H1 (cell line): ENCODE measurements at regions of chr3 and their contacts with region 1.

Region 1: DNA sequence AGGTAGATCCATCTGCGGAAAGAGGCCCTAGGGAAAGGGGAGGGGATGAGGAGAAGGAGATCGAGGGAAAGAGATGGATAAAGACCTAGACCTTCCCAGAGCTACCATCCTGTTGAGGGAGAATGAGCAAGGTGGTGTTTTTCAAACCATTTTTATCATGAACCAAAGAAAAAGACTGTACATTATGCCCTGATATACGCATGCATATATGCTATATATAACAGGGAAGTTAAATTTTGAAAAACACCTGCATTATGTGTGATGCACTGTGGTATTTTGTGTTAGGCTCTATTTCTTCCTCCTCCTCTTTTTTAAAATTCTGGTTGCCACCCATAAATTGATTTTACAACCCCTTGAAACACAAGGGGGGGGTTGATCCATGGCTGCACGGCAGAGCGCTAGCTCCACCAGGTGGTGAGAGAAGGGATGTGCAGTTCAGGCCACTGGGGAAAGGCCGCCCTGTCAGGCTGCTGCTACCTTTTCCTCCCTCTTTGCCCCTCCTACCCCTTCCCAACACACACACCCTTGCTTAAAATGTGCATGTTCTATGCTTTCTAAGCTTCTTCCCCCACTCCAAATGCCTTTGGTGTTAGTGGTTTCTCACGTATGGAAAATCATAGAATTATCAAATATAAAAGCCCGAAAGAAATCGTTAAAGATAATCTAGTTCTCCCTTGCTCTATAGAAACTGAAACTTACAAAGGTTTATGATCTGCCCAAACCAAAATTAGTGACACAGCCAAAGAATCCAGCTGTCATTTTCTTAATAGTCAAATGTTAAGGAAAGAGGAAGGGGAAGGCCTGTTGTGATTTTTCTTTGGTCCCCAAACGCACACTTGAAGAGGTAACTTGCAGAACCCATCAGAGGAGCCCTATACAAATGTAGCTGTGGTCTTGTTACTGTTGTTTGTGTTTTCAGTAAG is 262.0 kb upstream of the UMPS start:
- DNase-seq: peak; percentile 50 to 84
- H3K4me3 ChIP-seq: no peak overlapping the region
- H3K27ac ChIP-seq: no peak overlapping the region
- H3K4me1 ChIP-seq: no peaks in the 10 kb centered on the region; a peak in 1 of 7 replicates
- H3K27me3 ChIP-seq: no peaks in the 10 kb centered on the region
- CTCF ChIP-seq: peak; percentile 95 to 100 (median 98)
- EP300 ChIP-seq: no peak
- POLR2A ChIP-seq: no peak
- RAD21 ChIP-seq: peak; percentile 99 to 100

Region 2: DNA sequence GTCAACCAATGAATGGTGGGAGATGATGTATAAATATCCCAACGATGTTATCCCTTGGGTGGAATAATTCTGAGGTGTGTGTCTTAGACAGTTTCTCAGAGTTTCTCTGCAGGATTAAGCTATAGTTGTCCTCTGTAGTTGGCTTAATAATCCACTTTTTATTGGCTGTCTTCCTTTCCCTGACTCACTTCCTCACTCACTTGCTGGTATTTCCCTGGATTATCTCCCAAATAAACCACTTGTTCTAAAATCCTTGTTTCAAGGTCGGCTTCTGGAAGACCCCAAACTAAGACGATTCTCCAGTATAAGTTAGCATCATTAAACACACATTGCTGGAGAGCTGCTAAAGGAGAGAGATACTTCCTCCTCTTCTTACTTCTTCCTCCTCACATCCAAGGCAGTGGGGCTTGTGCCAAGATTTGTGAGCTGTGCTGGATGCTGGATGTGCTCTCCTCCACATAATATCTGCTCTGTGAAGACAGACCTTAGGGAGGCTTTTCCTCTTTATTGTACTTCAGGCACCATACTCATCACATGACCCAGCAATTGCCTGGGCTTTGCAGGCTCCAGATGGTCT is 453.8 kb before region 1 on chr3:
- CTCF ChIA-PET with region 1: interaction called, 24 read pairs
- POLR2A ChIA-PET with region 1: no interaction called
- DNase-seq: no peak
- H3K4me3 ChIP-seq: no peak overlapping the region
- H3K27ac ChIP-seq: no peak overlapping the region
- H3K4me1 ChIP-seq: no peaks in the 10 kb centered on the region
- H3K27me3 ChIP-seq: no peaks in the 10 kb centered on the region
- CTCF ChIP-seq: no peak
- EP300 ChIP-seq: no peak
- POLR2A ChIP-seq: no peak
- RAD21 ChIP-seq: no peak

Region 3: DNA sequence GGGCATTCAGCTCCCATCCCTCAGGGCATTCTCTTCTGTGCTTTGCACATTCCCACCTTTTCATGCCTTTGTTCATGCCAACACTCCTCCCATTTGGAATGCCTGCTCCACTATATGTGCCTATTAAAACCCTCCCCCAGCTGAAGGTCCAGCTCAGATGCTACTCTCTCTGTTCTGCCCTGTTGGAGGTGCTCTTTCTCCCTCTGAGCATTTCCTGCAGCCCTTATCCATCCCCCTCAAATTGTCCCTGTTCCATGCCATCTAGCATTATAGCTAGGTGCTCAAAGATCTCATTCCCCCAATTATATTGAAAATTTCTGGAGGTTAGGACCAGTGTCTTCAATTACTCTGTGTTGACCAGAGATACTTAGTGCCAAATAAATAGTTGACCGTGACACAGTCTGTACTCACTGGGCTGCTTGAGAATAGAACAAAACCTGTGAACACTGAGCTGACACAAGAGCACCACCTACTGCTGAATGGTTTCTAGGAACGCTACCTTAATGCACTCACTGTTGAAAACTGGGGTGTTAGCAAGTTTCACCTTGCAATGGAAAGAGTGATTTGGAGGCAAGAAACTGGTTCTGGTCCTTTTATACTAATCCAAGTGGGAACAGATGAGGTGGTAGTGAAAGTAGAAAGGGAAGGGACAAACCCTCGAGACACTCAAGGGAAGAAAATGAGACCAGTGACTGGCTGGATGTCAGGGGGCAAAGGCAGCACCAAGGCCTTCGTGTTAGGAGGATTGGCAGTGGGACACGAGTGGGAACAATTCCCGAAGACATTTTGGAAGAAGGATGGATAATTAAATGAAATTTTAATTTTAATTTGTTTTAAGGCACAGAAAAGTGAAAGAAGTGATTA is 186.6 kb before region 1 on chr3:
- CTCF ChIA-PET with region 1: interaction called, 15 read pairs
- POLR2A ChIA-PET with region 1: no interaction called
- DNase-seq: no peak
- H3K4me3 ChIP-seq: no peak overlapping the region
- H3K27ac ChIP-seq: no peak overlapping the region
- H3K4me1 ChIP-seq: 0 out of 7 replicates have a peak, but pooled peaks cover 0 to 3% (median 0%) of the 10 kb centered on the region in 4 experiments
- H3K27me3 ChIP-seq: no peaks in the 10 kb centered on the region; a peak in 1 of 7 replicates
- CTCF ChIP-seq: peak in 2 of 3 experiments; percentile 73 to 85; a peak in 3 of 4 replicates
- EP300 ChIP-seq: no peak
- POLR2A ChIP-seq: no peak
- RAD21 ChIP-seq: peak; percentile 88 to 92

Region 4: GRCh38 chr3:124333931-124334640 is 134.2 kb before region 1 on chr3:
- CTCF ChIA-PET with region 1: interaction called, 12 read pairs
- POLR2A ChIA-PET with region 1: no interaction called
- DNase-seq: no peak
- H3K4me3 ChIP-seq: no peak overlapping the region
- H3K27ac ChIP-seq: no peak overlapping the region
- H3K4me1 ChIP-seq: no peaks in the 10 kb centered on the region
- H3K27me3 ChIP-seq: no peaks in the 10 kb centered on the region
- CTCF ChIP-seq: no peak
- EP300 ChIP-seq: no peak
- POLR2A ChIP-seq: no peak
- RAD21 ChIP-seq: no peak

Region 5: DNA sequence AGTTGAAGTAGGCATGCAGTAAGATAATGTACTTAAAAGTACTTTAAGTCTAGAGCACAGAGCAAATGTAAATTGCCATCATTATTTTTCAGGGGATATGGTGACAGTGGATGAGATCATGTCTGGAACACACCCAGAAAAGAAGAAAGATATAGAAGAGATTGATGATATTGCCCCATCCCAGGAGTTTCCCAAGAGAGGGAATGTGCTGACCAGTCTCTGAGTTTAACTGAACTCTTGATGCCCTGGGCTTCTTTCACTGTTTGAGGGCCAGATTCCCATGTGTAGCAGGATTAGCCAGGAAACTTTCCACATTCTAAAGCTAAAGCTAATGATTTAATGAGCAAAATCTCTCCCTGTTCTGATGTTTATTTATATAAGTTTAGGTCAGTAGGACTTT is 104.8 kb before region 1 on chr3:
- CTCF ChIA-PET with region 1: interaction called, 15 read pairs
- POLR2A ChIA-PET with region 1: no interaction called
- DNase-seq: no peak
- H3K4me3 ChIP-seq: no peak overlapping the region
- H3K27ac ChIP-seq: no peak overlapping the region
- H3K4me1 ChIP-seq: peaks cover 0 to 8% (median 4%) of the 10 kb centered on the region in 4 experiments; a peak in 6 of 7 replicates
- H3K27me3 ChIP-seq: no peaks in the 10 kb centered on the region
- CTCF ChIP-seq: no peak
- EP300 ChIP-seq: no peak
- POLR2A ChIP-seq: no peak
- RAD21 ChIP-seq: no peak

Region 6: DNA sequence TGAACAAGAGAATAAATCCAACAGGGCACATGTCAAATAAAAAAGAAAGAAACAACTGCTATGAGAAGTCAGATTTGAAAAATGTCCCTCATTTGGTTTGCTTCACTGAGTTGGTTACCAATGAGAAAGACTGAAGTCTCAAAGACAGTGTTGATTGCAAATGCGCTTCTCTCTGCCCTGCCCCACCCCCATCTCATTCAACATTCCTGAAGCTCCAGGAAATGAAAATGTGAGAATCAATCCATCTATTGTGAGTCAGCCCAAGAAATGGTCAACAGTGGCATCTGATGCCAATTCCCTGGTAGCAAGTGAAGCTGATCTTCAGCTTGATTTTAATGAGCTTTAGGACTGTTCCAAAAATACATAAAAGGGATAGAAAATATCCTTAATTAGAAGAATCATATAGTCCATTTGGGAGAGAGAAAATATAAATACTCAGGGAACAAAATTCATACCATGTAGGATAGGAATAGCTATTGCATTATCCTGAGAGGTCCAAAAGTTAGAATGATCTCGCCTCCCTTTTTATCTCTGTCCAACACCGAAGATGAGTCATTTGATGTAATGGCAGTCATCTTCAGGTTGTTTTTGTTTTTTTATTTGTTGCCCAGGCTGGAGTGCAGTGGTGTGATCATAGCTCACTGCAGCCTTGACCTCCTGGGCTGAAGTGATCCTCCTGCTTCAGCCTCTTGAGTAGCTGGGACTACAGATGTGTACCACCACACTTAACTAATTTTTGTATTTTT is 61.8 kb after region 1 on chr3:
- CTCF ChIA-PET with region 1: interaction called, 10 read pairs
- POLR2A ChIA-PET with region 1: no interaction called
- DNase-seq: no peak
- H3K4me3 ChIP-seq: no peak overlapping the region; a peak in 1 of 8 replicates
- H3K27ac ChIP-seq: no peak overlapping the region
- H3K4me1 ChIP-seq: peaks cover 0 to 5% (median 2%) of the 10 kb centered on the region in 4 experiments; a peak in 2 of 7 replicates
- H3K27me3 ChIP-seq: no peaks in the 10 kb centered on the region
- CTCF ChIP-seq: no peak
- EP300 ChIP-seq: no peak
- POLR2A ChIP-seq: no peak
- RAD21 ChIP-seq: no peak

Region 7: GRCh38 chr3:124559881-124560574 is 91.8 kb after region 1 on chr3:
- CTCF ChIA-PET with region 1: interaction called, 31 read pairs
- POLR2A ChIA-PET with region 1: no interaction called
- DNase-seq: peak in 1 of 2 experiments; percentile 84
- H3K4me3 ChIP-seq: no peak overlapping the region
- H3K27ac ChIP-seq: no peak overlapping the region
- H3K4me1 ChIP-seq: peaks cover 0 to 4% (median 2%) of the 10 kb centered on the region in 4 experiments; a peak in 4 of 7 replicates
- H3K27me3 ChIP-seq: no peaks in the 10 kb centered on the region
- CTCF ChIP-seq: peak; percentile 53 to 93 (median 86)
- EP300 ChIP-seq: no peak
- POLR2A ChIP-seq: no peak
- RAD21 ChIP-seq: peak; percentile 92 to 93